Spleen (tissue), 13 donors: ENCODE measurements at regions of chr12 and their contacts with region 1.

Region 1: GRCh38 chr12:113098446-113098896 is 37.1 kb downstream of the RASAL1 start:
- DNase-seq: peak; percentile 89
- H3K4me3 ChIP-seq: no peak overlapping the region
- H3K27ac ChIP-seq: peak overlapping the region in 3 of 8 donors; percentile 21 to 39 (median 31)
- H3K4me1 ChIP-seq: peaks cover 5 to 58% (median 20%) of the 10 kb centered on the region in 6 donors
- H3K27me3 ChIP-seq: peaks cover 0 to 7% (median 0%) of the 10 kb centered on the region in 7 donors
- CTCF ChIP-seq: peak; percentile 80 to 96 (median 90)
- POLR2A ChIP-seq: no peak

Region 2: DNA sequence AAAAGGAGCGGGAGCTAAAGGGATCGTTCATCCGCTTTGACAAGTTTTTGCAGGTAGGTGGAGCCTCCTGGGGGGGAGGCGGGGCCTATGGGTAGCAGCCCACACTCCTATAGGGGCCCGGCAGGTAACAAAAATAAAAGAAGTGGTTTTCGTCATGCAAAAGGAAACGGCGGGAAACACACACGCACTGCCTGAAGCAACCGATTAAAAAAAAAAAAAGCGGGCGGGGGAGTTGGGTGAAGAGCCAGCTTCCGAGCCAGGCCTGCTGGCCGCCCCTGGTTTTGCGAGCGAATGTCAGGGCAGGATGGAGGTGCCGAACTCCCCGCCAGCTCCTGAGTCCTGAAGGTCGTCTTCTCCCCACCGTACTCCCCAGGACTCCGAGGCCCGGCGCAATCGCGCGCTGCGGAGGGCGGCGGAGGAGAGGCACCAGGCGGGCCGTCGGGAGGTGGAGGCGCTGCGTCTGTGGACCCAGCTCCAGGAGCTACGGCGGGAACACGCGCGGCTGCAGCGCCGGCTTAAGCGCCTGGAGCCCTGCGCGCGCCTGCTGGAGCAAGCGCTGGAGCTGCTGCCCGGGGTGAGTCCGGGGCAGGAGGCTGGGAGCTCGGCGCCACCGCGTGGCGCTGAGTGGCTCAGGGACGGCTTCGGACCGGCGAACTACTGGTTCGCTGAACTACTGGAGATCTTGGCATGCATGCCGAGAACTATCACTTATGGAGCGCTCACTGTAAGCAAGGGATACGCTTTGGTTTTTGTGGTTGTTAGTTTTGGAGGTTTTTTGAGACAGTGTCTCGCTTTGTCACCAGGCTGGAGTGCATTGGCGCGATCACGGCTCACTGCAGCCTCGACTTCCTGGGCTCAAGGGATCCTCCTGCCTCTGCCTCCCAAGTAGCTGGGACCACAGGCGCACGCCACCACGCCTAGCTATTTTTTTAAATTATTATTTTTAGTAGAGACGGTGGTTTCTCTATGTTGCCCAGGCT is 54.7 kb after region 1 on chr12:
- intact Hi-C with region 1: loop called (anchors 10 kb)
- DNase-seq: peak; percentile 86
- H3K4me3 ChIP-seq: peak overlapping the region; percentile 31 to 72 (median 42)
- H3K27ac ChIP-seq: no peak overlapping the region
- H3K4me1 ChIP-seq: peaks cover 19 to 44% (median 29%) of the 10 kb centered on the region in 6 donors
- H3K27me3 ChIP-seq: peaks cover 0 to 74% (median 27%) of the 10 kb centered on the region in 7 donors
- CTCF ChIP-seq: peak in 7 of 11 experiments; percentile 35 to 56 (median 44)
- POLR2A ChIP-seq: no peak